Testis (tissue), 5 donors: ENCODE measurements at regions of chr3 and their contacts with region 1.

Region 1: GRCh38 chr3:120558771-120559241 is 37.3 kb upstream of the NDUFB4 start:
- DNase-seq: peak; percentile 95
- H3K4me3 ChIP-seq: peak overlapping the region; percentile 43 to 62
- H3K27ac ChIP-seq: peak overlapping the region; percentile 75 to 89
- H3K4me1 ChIP-seq: peaks cover 53% of the 10 kb centered on the region
- H3K27me3 ChIP-seq: no peaks in the 10 kb centered on the region
- CTCF ChIP-seq: peak; percentile 99 to 100 (median 100)
- POLR2A ChIP-seq: no peak

Region 2: GRCh38 chr3:120245386-120245785 is 313.4 kb before region 1 on chr3:
- intact Hi-C with region 1: loop called (anchors 10 kb)
- DNase-seq: no peak
- H3K4me3 ChIP-seq: no peak overlapping the region
- H3K27ac ChIP-seq: no peak overlapping the region
- H3K4me1 ChIP-seq: no peaks in the 10 kb centered on the region
- H3K27me3 ChIP-seq: no peaks in the 10 kb centered on the region
- CTCF ChIP-seq: no peak
- POLR2A ChIP-seq: no peak

Region 3: DNA sequence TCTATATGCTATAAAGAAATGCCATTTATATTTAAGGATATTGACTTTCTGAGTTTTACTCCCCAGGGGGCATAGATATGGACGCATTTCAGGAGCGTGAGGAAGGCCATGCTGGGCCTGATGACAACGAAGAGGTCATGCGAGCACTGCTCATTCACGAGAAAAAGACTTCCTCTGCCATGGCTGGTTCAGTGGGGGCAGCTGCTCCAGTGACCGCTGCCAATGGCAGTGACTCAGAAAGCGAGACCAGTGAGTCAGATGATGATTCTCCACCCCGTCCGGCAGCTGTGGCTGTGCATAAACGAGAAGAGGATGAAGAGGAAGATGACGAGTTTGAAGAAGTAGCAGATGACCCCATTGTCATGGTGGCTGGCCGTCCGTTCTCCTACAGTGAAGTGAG is 222.2 kb after region 1 on chr3:
- intact Hi-C with region 1: no loop called
- DNase-seq: no peak
- H3K4me3 ChIP-seq: no peak overlapping the region
- H3K27ac ChIP-seq: no peak overlapping the region
- H3K4me1 ChIP-seq: no peaks in the 10 kb centered on the region
- H3K27me3 ChIP-seq: no peaks in the 10 kb centered on the region
- CTCF ChIP-seq: no peak
- POLR2A ChIP-seq: no peak